Esophagus squamous epithelium (tissue), 5 donors: ENCODE measurements at regions of chr19 and their contacts with region 1.

Region 1: GRCh38 chr19:17996826-17997316 is 11.1 kb upstream of the ARRDC2 start:
- DNase-seq: no peak
- H3K4me3 ChIP-seq: no peak overlapping the region
- H3K27ac ChIP-seq: no peak overlapping the region
- H3K4me1 ChIP-seq: peaks cover 9 to 32% (median 10%) of the 10 kb centered on the region in 3 donors
- H3K27me3 ChIP-seq: peaks cover 0 to 7% (median 0%) of the 10 kb centered on the region in 4 donors
- CTCF ChIP-seq: peak; percentile 96 to 98 (median 98)
- POLR2A ChIP-seq: no peak

Region 2: DNA sequence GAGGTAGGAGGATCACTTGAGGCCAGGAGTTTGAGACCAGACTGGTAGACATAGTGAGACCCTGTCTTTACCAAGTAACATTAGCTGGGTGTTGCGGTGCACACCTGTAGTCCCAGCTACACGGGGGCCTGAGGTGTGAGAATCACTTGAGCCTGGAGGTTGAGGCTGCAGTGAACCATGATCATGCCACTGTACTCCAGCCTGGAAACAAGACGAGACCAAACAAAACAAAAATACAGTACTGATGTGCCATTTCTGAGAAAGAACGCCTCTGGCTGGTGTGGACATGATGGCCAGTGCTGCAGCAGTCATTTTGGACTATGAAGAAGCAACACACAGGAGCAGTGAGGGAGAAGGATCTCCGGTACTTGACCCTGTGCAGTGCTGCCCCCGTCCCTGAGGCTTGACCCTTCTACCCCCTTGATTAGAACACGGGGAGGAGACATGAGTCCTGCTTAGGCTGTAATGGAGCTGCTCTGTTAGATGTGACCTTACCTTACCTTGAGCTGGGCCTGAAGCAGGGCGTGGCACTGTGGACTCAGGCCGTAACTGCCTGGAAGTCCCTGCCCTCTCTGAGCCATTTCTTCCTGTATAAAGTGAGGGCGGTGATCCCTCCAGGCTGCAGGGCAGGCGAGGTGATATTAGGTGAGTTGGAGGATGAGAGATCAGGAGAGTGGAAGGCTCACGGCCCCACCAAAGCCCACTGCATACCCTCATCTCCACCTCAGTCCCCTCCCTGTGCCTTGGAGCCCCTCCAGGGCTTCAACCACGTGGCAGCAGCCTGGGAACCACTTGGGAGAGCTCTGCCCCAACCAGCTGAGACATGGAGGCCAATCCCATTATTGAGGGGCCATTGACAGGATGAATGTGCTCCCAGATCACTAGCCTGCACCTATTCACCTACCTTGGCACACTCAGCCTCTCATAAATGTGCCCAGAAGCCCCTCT is 131.2 kb before region 1 on chr19:
- intact Hi-C with region 1: loop called (anchors 5 kb)
- DNase-seq: no peak
- H3K4me3 ChIP-seq: no peak overlapping the region
- H3K27ac ChIP-seq: peak overlapping the region; percentile 35 to 65 (median 57)
- H3K4me1 ChIP-seq: peaks cover 26 to 56% (median 45%) of the 10 kb centered on the region in 3 donors
- H3K27me3 ChIP-seq: peaks cover 0 to 18% (median 5%) of the 10 kb centered on the region in 4 donors
- CTCF ChIP-seq: no peak
- POLR2A ChIP-seq: peak in 1 of 4 donors; percentile 9

Region 3: DNA sequence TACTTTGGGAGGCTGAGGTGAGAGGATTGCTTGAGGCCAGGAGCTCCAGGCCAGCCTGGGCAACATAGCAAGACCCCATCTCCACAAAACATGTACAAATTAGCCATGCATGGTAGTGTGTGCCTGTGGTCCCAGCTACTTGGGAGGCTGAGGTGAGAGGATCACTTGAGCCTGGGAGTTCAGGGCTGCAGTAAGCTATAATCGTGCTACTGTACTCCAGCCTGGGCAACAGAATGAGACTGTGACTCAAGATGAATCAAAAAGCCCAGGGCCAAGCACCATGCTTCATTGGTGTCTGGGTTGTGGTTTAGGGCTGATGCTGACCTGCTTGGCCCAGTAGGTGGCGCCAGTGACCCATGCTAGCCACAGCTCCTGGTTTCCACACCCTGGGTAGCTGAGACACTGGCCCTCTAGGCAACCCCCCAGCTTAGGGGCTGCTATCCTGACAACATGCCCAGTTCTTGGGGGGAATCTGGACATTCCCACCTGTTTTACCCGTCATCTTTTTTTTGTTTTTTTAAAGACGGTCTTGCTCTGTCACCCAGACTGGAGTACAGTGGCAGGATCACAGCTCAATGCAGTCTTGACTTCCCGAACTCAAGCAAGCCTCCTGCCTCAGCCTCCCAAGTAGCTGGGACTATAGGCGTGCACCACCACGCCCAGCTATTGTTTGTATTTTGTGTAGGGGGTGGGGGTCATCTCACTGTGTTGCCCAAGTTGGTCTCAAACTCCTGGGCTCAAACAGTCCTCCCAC is 58.6 kb before region 1 on chr19:
- intact Hi-C with region 1: loop called (anchors 5 kb)
- DNase-seq: no peak
- H3K4me3 ChIP-seq: no peak overlapping the region
- H3K27ac ChIP-seq: peak overlapping the region in 2 of 4 donors; percentile 29 to 38
- H3K4me1 ChIP-seq: peaks cover 11 to 30% (median 11%) of the 10 kb centered on the region in 3 donors
- H3K27me3 ChIP-seq: no peaks in the 10 kb centered on the region
- CTCF ChIP-seq: peak; percentile 89 to 97 (median 93)
- POLR2A ChIP-seq: no peak